Right cardiac atrium (tissue), 5 donors: ENCODE measurements at regions of chr3 and their contacts with region 1.

Region 1: DNA sequence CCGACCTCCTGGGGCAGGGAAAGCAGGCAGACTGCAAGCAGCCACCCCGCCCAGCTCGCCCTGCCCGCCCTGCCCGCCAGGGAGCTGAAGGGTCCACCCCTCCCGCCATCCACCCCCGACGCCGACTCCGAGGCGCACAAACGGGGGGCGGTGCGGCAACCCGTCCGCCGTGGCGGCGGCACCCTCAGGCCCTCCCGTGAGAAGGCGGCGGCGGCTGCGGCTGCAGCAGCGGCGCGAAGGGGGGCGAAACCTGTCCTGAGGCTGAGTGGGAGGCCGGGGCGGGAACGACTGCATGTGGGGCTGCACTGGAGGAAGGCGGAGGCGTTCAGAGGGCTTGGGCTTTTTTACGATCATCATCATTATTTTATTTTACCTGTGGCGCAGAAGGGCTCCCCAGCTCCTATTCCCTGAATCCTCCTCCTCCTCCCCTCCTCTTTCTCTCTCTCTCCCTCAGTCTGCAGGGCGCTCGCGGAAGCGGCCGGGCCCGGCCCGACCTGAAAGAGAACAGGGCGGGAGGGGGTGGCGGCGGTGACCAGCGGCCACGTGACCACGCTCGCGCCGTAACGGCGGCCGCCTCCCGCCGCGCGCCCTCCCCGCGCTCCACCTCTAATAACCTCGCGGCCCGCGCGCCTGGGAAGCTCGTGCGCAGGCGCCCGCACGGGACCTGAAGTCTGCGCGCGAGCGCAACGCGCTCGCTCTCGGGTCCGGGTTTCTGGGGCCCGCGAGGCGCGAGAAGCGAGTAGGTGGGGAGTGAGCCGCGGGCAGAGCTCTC is at the start of gene TBC1D5:
- DNase-seq: peak; percentile 98 to 99 (median 99)
- ATAC-seq: peak; percentile 97
- H3K4me3 ChIP-seq: peak within 1 kb of the TSS; percentile 97
- H3K27ac ChIP-seq: peak within 1 kb of the TSS; percentile 100
- H3K4me1 ChIP-seq: no peaks in the 10 kb centered on the region
- H3K27me3 ChIP-seq: no peaks in the 10 kb centered on the region
- total RNA-seq, gene TBC1D5: 36.8 to 44.3 (median 41.0) TPM

Region 2: GRCh38 chr3:17655743-17656142 is 86.6 kb before region 1 on chr3:
- intact Hi-C with region 1: loop called in 1 of 4 experiments (anchors 10 kb)
- DNase-seq: no peak
- ATAC-seq: no peak
- H3K4me3 ChIP-seq: no peak overlapping the region
- H3K27ac ChIP-seq: no peak overlapping the region
- H3K4me1 ChIP-seq: no peaks in the 10 kb centered on the region
- H3K27me3 ChIP-seq: no peaks in the 10 kb centered on the region